Activated T-helper 1 cell treated with anti-CD3 and anti-CD28 coated beads, Interleukin-12 subunit alpha, Interleukin-12 subunit beta, Interleukin-2, Interleukin-4 antibody, amounts not matched to agents 30 ng/mL and 10 ng/mL and 1 ng/mL, durations not matched to agents 14 hours and 24 hours and 36 hours (primary cell): ENCODE measurements at regions of chr6 and their contacts with region 1.

Region 1: GRCh38 chr6:144104898-144105487 is 9.6 kb upstream of the SF3B5 start:
- DNase-seq: peak; percentile 25
- H3K4me3 Mint-ChIP-seq: no peak overlapping the region
- H3K27ac Mint-ChIP-seq: no peak overlapping the region
- H3K4me1 Mint-ChIP-seq: peaks cover 13% of the 10 kb centered on the region
- H3K27me3 Mint-ChIP-seq: peaks cover 7% of the 10 kb centered on the region

Region 2: GRCh38 chr6:145214570-145214969 is 1109.6 kb after region 1 on chr6:
- intact Hi-C with region 1: loop called (anchors 10 kb)
- DNase-seq: no peak
- H3K4me3 Mint-ChIP-seq: no peak overlapping the region
- H3K27ac Mint-ChIP-seq: no peak overlapping the region
- H3K4me1 Mint-ChIP-seq: peaks cover 12% of the 10 kb centered on the region
- H3K27me3 Mint-ChIP-seq: peaks cover 4% of the 10 kb centered on the region